Activated naive CD8-positive, alpha-beta T cell treated with anti-CD3 and anti-CD28 coated beads, Interleukin-2, amount 10 ng/mL, durations not matched to agents 7 days and 5 days (primary cell): ENCODE measurements at regions of chr19 and their contacts with region 1.

Region 1: GRCh38 chr19:45862564-45863334 is at the start of gene SYMPK:
- DNase-seq: peak; percentile 98
- ATAC-seq: peak; percentile 96
- H3K4me3 Mint-ChIP-seq: peak within 1 kb of the TSS; percentile 91
- H3K27ac Mint-ChIP-seq: peak within 1 kb of the TSS; percentile 97
- H3K4me1 Mint-ChIP-seq: peaks cover 21% of the 10 kb centered on the region
- H3K27me3 Mint-ChIP-seq: peaks cover 39% of the 10 kb centered on the region
- total RNA-seq, gene SYMPK: 100 to 113 TPM

Region 2: DNA sequence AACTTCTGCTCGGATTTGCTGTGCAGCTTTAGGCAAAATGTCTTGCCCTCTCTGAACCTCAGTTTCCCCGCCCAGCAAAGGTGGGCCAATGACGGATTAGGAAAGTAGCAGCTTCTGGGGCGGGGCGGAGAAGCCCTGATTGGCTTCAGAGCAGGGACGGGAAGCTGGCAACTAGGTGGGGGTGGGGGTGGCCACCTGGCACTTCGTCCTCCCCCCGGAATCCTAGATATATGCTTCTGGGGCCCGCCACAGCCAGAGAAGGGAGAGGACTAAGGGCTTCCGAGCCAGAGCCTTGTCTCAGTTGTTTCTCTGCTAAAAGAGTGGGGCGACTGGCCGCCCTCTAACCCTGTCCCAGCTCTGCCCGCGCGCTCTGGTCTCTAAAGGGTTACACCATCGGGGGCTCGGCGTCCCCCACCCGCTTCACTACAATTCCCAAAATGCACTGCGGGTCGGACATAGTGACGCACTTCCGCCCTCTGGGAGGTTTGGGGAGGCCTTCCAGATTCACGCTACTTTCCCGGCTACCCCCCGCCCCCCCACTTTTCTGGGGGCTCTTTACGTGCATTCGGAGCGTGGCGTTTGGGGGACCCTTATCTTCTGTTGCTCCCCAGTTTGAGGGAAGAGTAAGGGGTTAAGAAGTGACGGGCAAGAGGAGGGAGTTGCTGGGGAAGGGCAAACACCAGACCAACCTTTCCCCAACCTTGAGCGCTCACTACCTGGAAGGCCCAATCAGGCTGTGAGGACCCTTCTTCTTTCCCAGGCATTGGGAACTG is 23.9 kb after region 1 on chr19:
- POLR2A ChIA-PET with region 1: interaction called, 30 read pairs
- DNase-seq: peak; percentile 88
- ATAC-seq: peak; percentile 83
- H3K4me3 Mint-ChIP-seq: peak overlapping the region; percentile 90
- H3K27ac Mint-ChIP-seq: peak overlapping the region; percentile 94
- H3K4me1 Mint-ChIP-seq: peaks cover 17% of the 10 kb centered on the region
- H3K27me3 Mint-ChIP-seq: no peaks in the 10 kb centered on the region